ENCODE measurements at regions of chr21 and their contacts with region 1.

Region 1: GRCh38 chr21:37366482-37367316 is at the start of gene DYRK1A:
- DNase-seq: peak; percentile 100
- ATAC-seq: peak; percentile 80
- H3K4me3 ChIP-seq: peak within 1 kb of the TSS; percentile 71 to 94 (median 87)
- H3K4me3 Mint-ChIP-seq: peak within 1 kb of the TSS; percentile 99
- H3K27ac ChIP-seq: peak within 1 kb of the TSS; percentile 93 to 98
- H3K27ac Mint-ChIP-seq: peak within 1 kb of the TSS; percentile 100
- H3K4me1 ChIP-seq: peaks cover 39 to 41% of the 10 kb centered on the region in 2 donors
- H3K4me1 Mint-ChIP-seq: peaks cover 48% of the 10 kb centered on the region
- H3K27me3 ChIP-seq: no peaks in the 10 kb centered on the region
- H3K27me3 Mint-ChIP-seq: no peaks in the 10 kb centered on the region
- CTCF ChIP-seq: no peak
- total RNA-seq, gene DYRK1A: 147 and 155 TPM in 2 replicates

Region 2: DNA sequence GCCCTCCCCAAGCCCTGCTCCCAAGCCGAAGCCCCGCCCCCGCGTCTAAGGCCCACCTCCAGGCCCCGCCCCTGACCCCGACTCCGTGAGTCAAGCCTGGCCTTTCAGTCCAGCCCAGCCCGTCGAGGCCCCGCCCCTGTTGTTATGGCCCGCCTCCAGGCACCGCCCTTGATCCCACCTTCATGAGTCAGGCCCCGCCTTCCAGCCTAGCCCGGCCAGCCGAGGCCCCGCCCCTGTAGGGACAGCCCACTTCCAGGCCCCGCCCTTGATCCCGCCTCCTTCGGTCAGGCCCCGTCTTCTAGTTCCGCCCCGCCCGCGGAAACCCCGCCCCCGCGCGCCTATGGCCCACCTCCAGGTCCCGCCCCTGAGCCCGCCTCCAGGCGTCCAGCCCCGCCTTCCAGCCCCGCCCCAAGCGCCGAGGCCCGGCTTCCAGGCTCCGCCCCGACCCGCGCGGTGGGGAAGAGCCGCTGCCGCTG is 1210.3 kb before region 1 on chr21:
- CTCF ChIA-PET with region 1: no interaction called
- POLR2A ChIA-PET with region 1: no interaction called
- intact Hi-C with region 1: loop called (anchors 5 kb)
- DNase-seq: peak; percentile 100
- ATAC-seq: peak; percentile 88
- H3K4me3 ChIP-seq: peak overlapping the region in 4 of 5 experiments; percentile 63 to 88 (median 80)
- H3K4me3 Mint-ChIP-seq: peak overlapping the region; percentile 86
- H3K27ac ChIP-seq: peak overlapping the region; percentile 81 to 85
- H3K27ac Mint-ChIP-seq: peak overlapping the region; percentile 78
- H3K4me1 ChIP-seq: peaks cover 14 to 30% of the 10 kb centered on the region in 2 donors
- H3K4me1 Mint-ChIP-seq: peaks cover 35% of the 10 kb centered on the region
- H3K27me3 ChIP-seq: no peaks in the 10 kb centered on the region
- H3K27me3 Mint-ChIP-seq: no peaks in the 10 kb centered on the region
- CTCF ChIP-seq: no peak

Region 3: GRCh38 chr21:36976882-36977651 is 389.6 kb before region 1 on chr21:
- CTCF ChIA-PET with region 1: no interaction called
- POLR2A ChIA-PET with region 1: no interaction called
- intact Hi-C with region 1: loop called (anchors 5 kb)
- DNase-seq: peak; percentile 76
- ATAC-seq: peak; percentile 88
- H3K4me3 ChIP-seq: no peak overlapping the region
- H3K4me3 Mint-ChIP-seq: peak overlapping the region; percentile 47
- H3K27ac ChIP-seq: no peak overlapping the region
- H3K27ac Mint-ChIP-seq: peak overlapping the region; percentile 77
- H3K4me1 ChIP-seq: peaks cover 16 to 22% of the 10 kb centered on the region in 2 donors
- H3K4me1 Mint-ChIP-seq: peaks cover 24% of the 10 kb centered on the region
- H3K27me3 ChIP-seq: peaks cover 0 to 13% (median 5%) of the 10 kb centered on the region in 4 experiments
- H3K27me3 Mint-ChIP-seq: peaks cover 3% of the 10 kb centered on the region
- CTCF ChIP-seq: peak; percentile 72

Region 4: DNA sequence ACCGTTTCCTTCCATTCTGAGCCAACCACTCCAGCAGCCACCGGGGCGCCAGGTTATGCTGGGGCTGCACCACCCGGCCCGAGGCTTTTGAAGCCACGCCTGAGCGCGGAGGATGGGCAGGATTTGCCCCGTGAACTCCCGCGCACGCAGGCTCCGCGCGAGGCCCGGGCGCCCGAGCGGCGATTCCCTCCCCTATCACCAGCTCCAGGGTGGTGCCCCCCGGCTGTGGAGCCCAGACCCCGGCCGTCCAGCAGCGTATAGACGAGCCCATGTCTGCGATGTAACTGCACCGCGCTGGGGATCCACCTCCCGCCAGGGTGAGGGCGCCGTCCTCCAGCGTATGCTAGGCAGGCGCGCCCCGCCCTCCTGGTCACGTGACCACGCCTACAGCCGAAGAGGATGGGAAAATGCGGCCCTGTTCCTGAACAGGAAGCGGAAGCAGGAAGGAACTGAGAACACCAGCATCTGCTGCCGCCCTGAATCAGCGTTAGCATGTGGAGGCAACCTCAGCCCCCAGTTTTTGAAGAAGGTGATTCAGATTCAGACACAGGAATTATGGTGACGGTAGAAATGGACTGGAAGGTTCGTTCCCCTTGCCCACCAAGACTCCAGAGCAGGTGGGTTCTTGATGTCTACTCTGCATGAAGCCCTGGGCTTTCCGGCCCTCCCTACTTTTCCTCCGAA is 145.6 kb before region 1 on chr21:
- CTCF ChIA-PET with region 1: interaction called, 3 read pairs
- POLR2A ChIA-PET with region 1: interaction called, 3 read pairs
- intact Hi-C with region 1: loop called (anchors 2 kb)
- DNase-seq: peak; percentile 93
- ATAC-seq: peak; percentile 90
- H3K4me3 ChIP-seq: peak overlapping the region; percentile 36 to 86 (median 78)
- H3K4me3 Mint-ChIP-seq: peak overlapping the region; percentile 96
- H3K27ac ChIP-seq: peak overlapping the region; percentile 68 to 72
- H3K27ac Mint-ChIP-seq: peak overlapping the region; percentile 91
- H3K4me1 ChIP-seq: peaks cover 15 to 30% of the 10 kb centered on the region in 2 donors
- H3K4me1 Mint-ChIP-seq: peaks cover 27% of the 10 kb centered on the region
- H3K27me3 ChIP-seq: no peaks in the 10 kb centered on the region
- H3K27me3 Mint-ChIP-seq: no peaks in the 10 kb centered on the region
- CTCF ChIP-seq: peak; percentile 24

Region 5: GRCh38 chr21:37407719-37408420 is 41.2 kb after region 1 on chr21:
- CTCF ChIA-PET with region 1: no interaction called
- POLR2A ChIA-PET with region 1: no interaction called
- intact Hi-C with region 1: loop called (anchors 5 kb)
- DNase-seq: no peak
- ATAC-seq: no peak
- H3K4me3 ChIP-seq: no peak overlapping the region
- H3K4me3 Mint-ChIP-seq: no peak overlapping the region
- H3K27ac ChIP-seq: peak overlapping the region in 1 of 2 donors; percentile 26
- H3K27ac Mint-ChIP-seq: peak overlapping the region; percentile 12
- H3K4me1 ChIP-seq: peaks cover 58 to 75% of the 10 kb centered on the region in 2 donors
- H3K4me1 Mint-ChIP-seq: peaks cover 82% of the 10 kb centered on the region
- H3K27me3 ChIP-seq: no peaks in the 10 kb centered on the region
- H3K27me3 Mint-ChIP-seq: no peaks in the 10 kb centered on the region
- CTCF ChIP-seq: no peak

Region 6: DNA sequence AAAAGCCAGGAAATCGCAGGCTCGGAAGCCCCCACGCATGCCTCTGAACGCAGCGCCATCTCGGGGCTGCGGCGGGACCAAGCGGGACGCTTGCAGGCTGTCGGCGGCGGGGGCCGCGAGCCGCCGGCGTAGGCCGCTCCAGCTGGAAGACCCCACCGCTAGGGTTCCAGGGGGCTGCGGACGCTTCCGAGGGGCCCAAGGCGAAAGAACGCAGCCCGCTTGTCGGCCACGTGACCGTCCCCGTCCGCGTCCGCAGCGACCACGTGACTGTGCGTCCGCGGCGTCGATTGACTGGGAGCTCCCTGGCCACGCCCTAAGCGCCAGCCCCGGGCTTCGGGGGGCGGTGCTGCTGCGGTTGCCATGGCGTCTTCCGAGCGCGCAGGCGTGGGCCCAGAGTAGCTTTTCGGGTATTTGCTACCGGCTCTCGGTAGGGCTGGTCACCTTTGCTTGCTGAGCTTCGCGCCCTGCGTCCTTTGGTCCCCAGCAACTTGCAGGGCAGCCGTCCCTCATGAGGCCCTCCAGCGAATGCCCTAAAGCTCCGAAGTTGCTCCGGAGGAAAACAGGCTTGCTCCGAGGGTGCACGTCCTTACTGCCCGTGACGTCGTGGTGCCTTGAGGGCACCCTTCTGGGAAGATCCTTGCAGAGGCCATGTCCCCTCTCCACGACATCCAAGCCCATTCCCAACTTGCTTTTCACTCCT is 197.1 kb after region 1 on chr21:
- CTCF ChIA-PET with region 1: no interaction called
- POLR2A ChIA-PET with region 1: interaction called, 15 read pairs
- intact Hi-C with region 1: no loop called
- DNase-seq: peak; percentile 94
- ATAC-seq: peak; percentile 92
- H3K4me3 ChIP-seq: peak overlapping the region; percentile 61 to 91 (median 82)
- H3K4me3 Mint-ChIP-seq: peak overlapping the region; percentile 97
- H3K27ac ChIP-seq: peak overlapping the region; percentile 70 to 88
- H3K27ac Mint-ChIP-seq: peak overlapping the region; percentile 97
- H3K4me1 ChIP-seq: peaks cover 10 to 19% of the 10 kb centered on the region in 2 donors
- H3K4me1 Mint-ChIP-seq: peaks cover 18% of the 10 kb centered on the region
- H3K27me3 ChIP-seq: no peaks in the 10 kb centered on the region
- H3K27me3 Mint-ChIP-seq: peaks cover 3% of the 10 kb centered on the region
- CTCF ChIP-seq: peak; percentile 61

Region 7: DNA sequence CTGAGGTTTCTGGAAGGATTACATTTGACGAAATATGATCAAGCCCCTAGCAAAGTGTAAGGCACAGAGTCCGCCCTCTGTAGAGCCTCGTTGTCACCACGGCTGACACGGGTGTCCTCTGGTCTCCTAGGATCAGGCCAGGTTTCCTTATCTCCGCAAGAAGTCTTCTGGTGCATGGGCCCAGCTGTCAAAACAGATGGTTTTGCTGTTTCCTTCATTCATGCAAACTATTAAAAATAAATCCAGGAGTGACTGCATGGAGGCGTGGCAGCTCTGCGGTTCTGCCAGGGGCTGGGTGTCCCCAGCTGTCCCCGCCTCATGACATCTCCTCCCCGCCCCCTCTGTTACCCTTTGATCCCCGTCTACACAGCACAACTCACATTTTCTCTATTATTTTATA is 208.9 kb after region 1 on chr21:
- CTCF ChIA-PET with region 1: no interaction called
- POLR2A ChIA-PET with region 1: no interaction called
- intact Hi-C with region 1: no loop called
- DNase-seq: no peak
- ATAC-seq: no peak
- H3K4me3 ChIP-seq: no peak overlapping the region
- H3K4me3 Mint-ChIP-seq: no peak overlapping the region
- H3K27ac ChIP-seq: no peak overlapping the region
- H3K27ac Mint-ChIP-seq: no peak overlapping the region
- H3K4me1 ChIP-seq: no peaks in the 10 kb centered on the region
- H3K4me1 Mint-ChIP-seq: no peaks in the 10 kb centered on the region
- H3K27me3 ChIP-seq: no peaks in the 10 kb centered on the region
- H3K27me3 Mint-ChIP-seq: peaks cover 33% of the 10 kb centered on the region
- CTCF ChIP-seq: no peak